Activated CD4-positive, alpha-beta memory T cell treated with anti-CD3 and anti-CD28 coated beads, Interleukin-2, amount 10 ng/mL, durations not matched to agents 7 days and 5 days (primary cell): ENCODE measurements at regions of chr2 and their contacts with region 1.

Region 1: GRCh38 chr2:222860740-222861410 is at the start of gene ACSL3:
- DNase-seq: peak; percentile 96
- H3K4me3 Mint-ChIP-seq: peak within 1 kb of the TSS; percentile 70
- H3K27ac Mint-ChIP-seq: peak within 1 kb of the TSS; percentile 78
- H3K4me1 Mint-ChIP-seq: peaks cover 14% of the 10 kb centered on the region
- H3K27me3 Mint-ChIP-seq: peaks cover 11% of the 10 kb centered on the region
- total RNA-seq, gene ACSL3: 49.5 to 57.2 TPM

Region 2: DNA sequence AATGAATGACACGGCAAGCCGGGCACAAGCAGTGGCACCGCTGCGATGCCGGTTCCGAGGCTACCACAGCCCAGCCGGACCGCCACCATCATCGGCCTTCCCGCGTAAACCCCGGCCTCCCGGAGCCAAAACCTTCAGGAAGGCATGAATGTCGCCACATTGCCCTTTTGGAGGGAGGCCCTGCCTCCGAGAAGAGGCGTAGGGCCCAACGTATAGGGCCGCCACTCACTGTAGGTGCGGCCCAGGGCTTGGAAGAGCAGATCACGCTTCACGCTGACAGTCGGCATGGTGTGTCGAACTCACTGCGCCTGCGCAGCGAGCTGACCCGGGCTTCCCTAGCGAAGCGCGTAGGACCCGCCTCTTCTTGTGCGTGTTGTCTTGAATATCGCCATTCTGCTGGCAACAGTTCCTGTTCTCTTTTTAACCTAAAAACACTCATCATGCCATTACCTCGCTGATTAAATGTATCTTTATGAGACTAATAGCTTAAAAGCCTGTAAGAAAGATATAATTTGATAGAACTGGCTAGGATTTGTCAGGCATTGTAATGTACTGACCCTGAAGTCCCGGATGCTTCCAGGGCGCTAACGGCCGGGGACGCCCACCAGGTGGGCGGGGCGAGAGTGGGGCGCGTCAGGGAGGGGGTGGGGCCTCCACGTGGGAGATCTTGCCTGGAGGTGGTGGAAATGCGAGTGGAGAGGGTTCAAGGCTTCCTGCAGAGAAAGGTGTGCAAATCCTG is 204.9 kb before region 1 on chr2 and contains the start of gene FARSB:
- CTCF ChIA-PET with region 1: no interaction called
- POLR2A ChIA-PET with region 1: interaction called, 13 read pairs
- DNase-seq: peak; percentile 93
- H3K4me3 Mint-ChIP-seq: peak within 1 kb of the TSS; percentile 95
- H3K27ac Mint-ChIP-seq: peak within 1 kb of the TSS; percentile 85
- H3K4me1 Mint-ChIP-seq: peaks cover 46% of the 10 kb centered on the region
- H3K27me3 Mint-ChIP-seq: no peaks in the 10 kb centered on the region
- total RNA-seq, gene FARSB: 20.8 to 21.5 TPM